Colonic mucosa (tissue), 4 donors: ENCODE measurements at regions of chr3 and their contacts with region 1.

Region 1: DNA sequence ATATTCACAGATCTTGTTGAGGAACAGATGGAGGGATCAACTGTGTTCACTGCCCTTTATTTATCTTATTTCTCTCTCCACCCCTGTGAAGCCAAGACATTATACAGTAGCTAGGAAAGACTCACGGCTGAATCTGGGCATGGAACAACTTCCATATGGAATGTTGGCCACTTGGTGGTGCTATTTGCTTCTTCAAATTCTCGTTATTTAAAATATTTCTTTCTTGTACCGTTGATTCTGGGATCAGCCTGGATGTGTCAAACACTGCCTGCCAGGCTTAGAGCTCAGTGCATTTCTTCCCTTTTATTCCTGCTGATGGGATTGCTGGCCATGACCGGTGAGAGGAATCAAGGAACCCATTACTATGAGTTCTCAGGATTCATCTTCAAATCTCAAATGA is 17.5 kb upstream of the GASK1A start:
- DNase-seq: peak; percentile 26
- H3K4me3 ChIP-seq: no peak overlapping the region
- H3K27ac ChIP-seq: no peak overlapping the region
- H3K4me1 ChIP-seq: no peaks in the 10 kb centered on the region
- H3K27me3 ChIP-seq: no peaks in the 10 kb centered on the region
- CTCF ChIP-seq: peak; percentile 50

Region 2: GRCh38 chr3:43155464-43156121 is 194.0 kb after region 1 on chr3:
- intact Hi-C with region 1: loop called (anchors 2 kb)
- DNase-seq: peak; percentile 60
- H3K4me3 ChIP-seq: no peak overlapping the region
- H3K27ac ChIP-seq: no peak overlapping the region
- H3K4me1 ChIP-seq: no peaks in the 10 kb centered on the region
- H3K27me3 ChIP-seq: no peaks in the 10 kb centered on the region
- CTCF ChIP-seq: peak; percentile 49